ENCODE measurements at regions of chr1 and their contacts with region 1.

Region 1: DNA sequence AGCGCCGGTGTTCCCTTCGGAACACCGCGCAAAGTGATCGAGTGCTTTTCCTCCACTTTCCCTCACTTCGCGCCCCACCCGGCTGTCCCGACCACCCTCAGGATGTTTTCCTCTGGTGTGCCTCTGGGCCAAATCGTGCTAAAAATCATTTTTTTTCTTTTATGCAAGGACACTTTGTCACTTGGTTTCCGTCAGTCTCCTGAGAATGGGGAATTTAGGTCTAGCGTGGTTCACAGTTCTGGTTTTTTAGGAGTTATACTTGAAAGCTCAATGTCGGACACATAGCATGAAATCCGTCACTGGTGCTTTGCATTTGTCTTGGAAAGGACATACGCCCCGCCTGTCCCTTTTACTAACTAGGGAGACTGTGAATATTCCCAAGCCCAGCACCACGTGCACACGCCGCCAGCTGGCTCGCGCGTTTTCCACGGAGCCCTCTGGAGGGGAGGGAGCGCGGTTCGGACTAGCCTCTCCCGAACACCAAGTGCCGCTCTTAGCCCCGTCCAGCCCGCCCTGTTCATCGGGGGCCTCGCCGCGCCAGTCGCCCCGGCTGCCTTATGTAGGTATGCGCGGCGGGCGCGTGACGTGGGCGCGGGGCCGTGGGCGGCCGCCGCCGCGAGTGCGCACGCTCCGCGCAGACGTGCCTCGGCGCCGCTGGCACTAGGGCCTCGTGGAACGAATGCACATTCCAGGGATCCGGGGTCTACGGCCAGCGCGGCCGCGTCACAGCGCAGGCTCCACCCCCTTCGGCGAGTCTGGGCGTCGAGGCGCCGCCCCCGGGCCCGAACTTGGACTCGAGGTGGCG is 572 bp upstream of the IRF2BP2 start:
- DNase-seq: peak; percentile 96 to 98
- ATAC-seq: peak; percentile 63 to 78 (median 72)
- H3K4me3 ChIP-seq: peak overlapping the region; percentile 72
- H3K27ac ChIP-seq: peak overlapping the region; percentile 99
- H3K4me1 ChIP-seq: peaks cover 36% of the 10 kb centered on the region
- H3K27me3 ChIP-seq: no peaks in the 10 kb centered on the region
- CTCF ChIP-seq: peak; percentile 6

Region 2: GRCh38 chr1:234772345-234773147 is 162.0 kb after region 1 on chr1:
- intact Hi-C with region 1: loop called in 1 of 2 experiments (anchors 5 kb)
- DNase-seq: peak; percentile 75 to 87
- ATAC-seq: peak; percentile 98 to 99 (median 98)
- H3K4me3 ChIP-seq: peak overlapping the region; percentile 16
- H3K27ac ChIP-seq: peak overlapping the region; percentile 82
- H3K4me1 ChIP-seq: peaks cover 18% of the 10 kb centered on the region
- H3K27me3 ChIP-seq: peaks cover 0 to 13% (median 3%) of the 10 kb centered on the region in 3 donors
- CTCF ChIP-seq: no peak

Region 3: DNA sequence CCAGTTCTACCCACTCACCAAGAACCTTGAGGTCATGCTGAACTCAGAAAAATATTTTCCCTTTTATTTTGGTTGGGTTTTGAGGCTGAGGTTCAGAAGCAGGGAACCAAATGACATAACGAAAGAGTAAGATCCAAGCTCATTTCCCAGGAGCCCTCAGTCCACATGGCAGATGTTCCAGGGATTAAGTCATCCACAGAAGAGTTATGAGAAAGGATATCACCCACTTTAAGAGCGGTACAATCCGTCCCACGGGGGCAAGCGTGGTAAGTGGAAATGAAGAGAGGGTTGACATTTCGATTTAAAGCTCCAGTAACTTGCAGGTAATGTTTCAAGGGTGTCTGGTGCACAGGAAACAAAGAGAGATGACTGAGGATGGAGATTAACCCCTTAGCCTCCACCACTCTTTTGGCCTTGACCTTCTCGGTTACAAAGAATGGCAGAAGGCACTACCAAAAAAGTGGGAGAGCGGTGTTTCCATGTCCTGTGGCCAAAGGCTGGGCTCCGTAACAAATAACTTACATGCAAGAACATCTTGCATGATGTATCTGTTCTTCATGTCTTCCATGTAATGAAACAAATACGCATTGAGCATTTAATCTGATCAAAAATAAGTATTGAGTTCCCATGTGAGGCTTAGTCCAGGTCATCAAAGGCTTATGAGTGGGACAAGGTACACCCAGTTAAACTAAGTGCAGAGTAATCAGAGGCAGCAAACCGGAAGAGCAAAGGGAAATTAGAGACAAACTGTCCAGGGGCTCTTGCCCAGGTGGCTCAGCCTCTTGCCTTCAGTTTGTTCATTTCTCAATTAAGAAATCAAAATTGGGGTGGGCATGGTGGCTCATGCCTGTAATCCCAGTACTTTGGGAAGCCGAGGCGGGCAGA is 276.7 kb after region 1 on chr1:
- intact Hi-C with region 1: loop called (anchors 2 to 5 kb)
- DNase-seq: peak; percentile 50 to 81
- ATAC-seq: peak; percentile 56 to 69 (median 66)
- H3K4me3 ChIP-seq: peak overlapping the region; percentile 41
- H3K27ac ChIP-seq: peak overlapping the region; percentile 97
- H3K4me1 ChIP-seq: peaks cover 30% of the 10 kb centered on the region
- H3K27me3 ChIP-seq: no peaks in the 10 kb centered on the region
- CTCF ChIP-seq: no peak

Region 4: GRCh38 chr1:234978397-234979295 is 368.1 kb after region 1 on chr1:
- intact Hi-C with region 1: loop called (anchors 5 to 10 kb)
- DNase-seq: peak; percentile 54 to 77
- ATAC-seq: peak in 2 of 4 donors; percentile 15 to 39
- H3K4me3 ChIP-seq: no peak overlapping the region
- H3K27ac ChIP-seq: peak overlapping the region; percentile 86
- H3K4me1 ChIP-seq: peaks cover 63% of the 10 kb centered on the region
- H3K27me3 ChIP-seq: no peaks in the 10 kb centered on the region
- CTCF ChIP-seq: no peak

Measured in psoas muscle (tissue), 8 donors.